ENCODE measurements at regions of chr1 and their contacts with region 1.

Region 1: GRCh38 chr1:232648316-232648715 is 18.4 kb upstream of the SIPA1L2 start:
- DNase-seq: no peak
- H3K4me3 ChIP-seq: no peak overlapping the region
- H3K27ac ChIP-seq: no peak overlapping the region
- H3K4me1 ChIP-seq: no peaks in the 10 kb centered on the region
- H3K27me3 ChIP-seq: no peaks in the 10 kb centered on the region
- CTCF ChIP-seq: no peak
- EP300 ChIP-seq: no peak
- POLR2A ChIP-seq: no peak
- RAD21 ChIP-seq: no peak

Region 2: GRCh38 chr1:232636799-232637198 is 11.5 kb before region 1 on chr1:
- CTCF ChIA-PET with region 1: interaction called, 11 read pairs
- POLR2A ChIA-PET with region 1: no interaction called
- DNase-seq: no peak
- H3K4me3 ChIP-seq: no peak overlapping the region
- H3K27ac ChIP-seq: no peak overlapping the region
- H3K4me1 ChIP-seq: no peaks in the 10 kb centered on the region
- H3K27me3 ChIP-seq: peaks cover 0 to 5% (median 2%) of the 10 kb centered on the region in 4 experiments; a peak in 4 of 7 replicates
- CTCF ChIP-seq: no peak
- EP300 ChIP-seq: no peak
- POLR2A ChIP-seq: no peak
- RAD21 ChIP-seq: no peak